ENCODE measurements at regions of chr1 and their contacts with region 1.

Region 1: GRCh38 chr1:95043141-95043980 is 29.4 kb downstream of the ALG14 start:
- DNase-seq: peak; percentile 74
- H3K4me3 ChIP-seq: no peak overlapping the region
- H3K27ac ChIP-seq: no peak overlapping the region
- H3K27me3 ChIP-seq: no peaks in the 10 kb centered on the region
- CTCF ChIP-seq: peak; percentile 99

Region 2: GRCh38 chr1:94846308-94846707 is 197.1 kb before region 1 on chr1:
- CTCF ChIA-PET with region 1: interaction called, 266 read pairs
- POLR2A ChIA-PET with region 1: no interaction called
- DNase-seq: no peak
- H3K4me3 ChIP-seq: no peak overlapping the region
- H3K27ac ChIP-seq: no peak overlapping the region
- H3K27me3 ChIP-seq: no peaks in the 10 kb centered on the region
- CTCF ChIP-seq: no peak

Region 3: DNA sequence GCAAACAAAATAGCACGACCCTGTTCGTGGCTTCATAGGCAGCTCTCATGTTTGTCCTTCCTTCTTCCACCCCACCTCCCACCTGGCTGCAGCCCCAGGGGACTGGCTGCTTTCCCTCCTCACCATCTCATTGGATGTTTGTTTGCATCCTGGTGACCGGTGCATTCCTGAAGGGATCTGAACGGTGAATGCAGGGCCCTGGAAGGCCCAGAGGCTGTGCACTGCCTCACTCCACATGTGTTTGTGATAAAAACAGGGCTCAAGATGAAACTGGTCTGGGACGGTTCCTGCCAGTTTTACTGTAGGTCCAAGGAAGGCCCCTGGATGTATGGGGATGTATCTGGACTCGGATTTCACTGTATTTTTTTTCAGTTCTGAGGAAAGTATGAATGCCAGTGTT is 159.3 kb before region 1 on chr1:
- CTCF ChIA-PET with region 1: interaction called, 14 read pairs
- POLR2A ChIA-PET with region 1: interaction called, 3 read pairs
- DNase-seq: no peak
- H3K4me3 ChIP-seq: no peak overlapping the region
- H3K27ac ChIP-seq: peak overlapping the region; percentile 92
- H3K27me3 ChIP-seq: no peaks in the 10 kb centered on the region
- CTCF ChIP-seq: no peak

Region 4: GRCh38 chr1:94926915-94927404 is 116.4 kb before region 1 on chr1 and contains the start of gene CNN3:
- CTCF ChIA-PET with region 1: interaction called, 42 read pairs
- POLR2A ChIA-PET with region 1: interaction called, 7 read pairs
- DNase-seq: peak; percentile 83
- H3K4me3 ChIP-seq: peak within 1 kb of the TSS; percentile 87
- H3K27ac ChIP-seq: peak within 1 kb of the TSS; percentile 97
- H3K27me3 ChIP-seq: no peaks in the 10 kb centered on the region
- CTCF ChIP-seq: no peak
- polyA plus RNA-seq, gene CNN3: 374 and 438 TPM in 2 replicates

Region 5: GRCh38 chr1:95023399-95024043 is 19.8 kb before region 1 on chr1:
- CTCF ChIA-PET with region 1: interaction called, 13 read pairs
- POLR2A ChIA-PET with region 1: interaction called, 3 read pairs
- DNase-seq: peak; percentile 76
- H3K4me3 ChIP-seq: no peak overlapping the region
- H3K27ac ChIP-seq: peak overlapping the region; percentile 69
- H3K27me3 ChIP-seq: no peaks in the 10 kb centered on the region
- CTCF ChIP-seq: no peak

Measured in AG04450 (cell line).